ENCODE measurements at regions of chr14 and their contacts with region 1.

Region 1: GRCh38 chr14:90903101-90903500 is 86.9 kb upstream of the TTC7B start:
- DNase-seq: peak; percentile 11 to 71 (median 57)
- ATAC-seq: peak; percentile 89
- H3K4me3 ChIP-seq: no peak overlapping the region
- H3K4me3 Mint-ChIP-seq: no peak overlapping the region
- H3K27ac ChIP-seq: no peak overlapping the region
- H3K27ac Mint-ChIP-seq: peak overlapping the region in 2 of 9 donors; percentile 36 to 48
- H3K4me1 ChIP-seq: no peaks in the 10 kb centered on the region
- H3K4me1 Mint-ChIP-seq: peaks cover 0 to 30% (median 0%) of the 10 kb centered on the region in 7 donors
- H3K27me3 ChIP-seq: no peaks in the 10 kb centered on the region
- H3K27me3 Mint-ChIP-seq: no peaks in the 10 kb centered on the region

Region 2: DNA sequence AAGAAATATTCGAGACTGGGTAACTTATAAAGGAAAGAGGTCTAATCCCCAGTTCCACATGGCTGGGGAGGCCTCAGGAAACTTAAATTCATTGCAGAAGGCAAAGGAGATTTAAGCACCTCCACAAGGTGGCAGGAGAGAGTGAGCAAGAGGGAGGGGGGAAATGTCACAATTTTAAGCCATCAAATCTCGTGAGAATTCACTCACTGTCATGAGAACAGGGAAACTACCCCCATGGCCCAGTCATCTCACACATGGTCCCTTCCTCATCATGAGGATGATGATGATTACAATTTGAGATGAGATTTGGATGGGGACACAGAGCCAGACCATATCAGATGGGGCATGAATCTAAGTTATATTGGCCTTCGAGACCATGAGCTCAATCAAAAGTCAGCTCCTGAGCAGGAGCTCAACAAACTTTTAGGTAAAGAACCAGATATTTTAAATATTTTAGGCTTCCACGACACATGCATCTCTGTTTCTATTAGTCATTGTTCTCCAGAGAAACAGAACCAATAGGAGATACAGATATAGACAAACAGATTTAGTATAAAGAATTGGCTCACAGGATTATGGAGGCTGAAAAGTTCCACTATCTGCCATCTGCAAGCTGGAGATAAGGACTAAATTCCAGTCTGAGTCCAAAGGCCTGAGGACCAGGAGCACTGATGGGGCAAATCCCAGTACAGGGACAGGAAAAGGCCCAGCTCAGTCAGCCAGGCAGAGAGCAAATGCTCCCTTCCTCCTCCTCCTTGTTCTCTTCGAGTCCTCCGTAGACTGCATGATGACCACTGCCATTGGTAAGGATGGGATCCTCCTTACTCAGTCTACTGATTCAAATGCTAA is 235.6 kb after region 1 on chr14:
- CTCF ChIA-PET with region 1: interaction called, 9 read pairs
- POLR2A ChIA-PET with region 1: no interaction called
- intact Hi-C with region 1: loop called (anchors 1 to 10 kb)
- DNase-seq: peak in 8 of 9 donors; percentile 11 to 56 (median 45)
- ATAC-seq: peak; percentile 75
- H3K4me3 ChIP-seq: no peak overlapping the region
- H3K4me3 Mint-ChIP-seq: no peak overlapping the region
- H3K27ac ChIP-seq: no peak overlapping the region
- H3K27ac Mint-ChIP-seq: peak overlapping the region in 4 of 9 donors; percentile 31 to 67 (median 52)
- H3K4me1 ChIP-seq: peaks cover 5 to 12% of the 10 kb centered on the region in 2 donors
- H3K4me1 Mint-ChIP-seq: peaks cover 16 to 59% (median 33%) of the 10 kb centered on the region in 7 donors
- H3K27me3 ChIP-seq: no peaks in the 10 kb centered on the region
- H3K27me3 Mint-ChIP-seq: no peaks in the 10 kb centered on the region

Region 3: DNA sequence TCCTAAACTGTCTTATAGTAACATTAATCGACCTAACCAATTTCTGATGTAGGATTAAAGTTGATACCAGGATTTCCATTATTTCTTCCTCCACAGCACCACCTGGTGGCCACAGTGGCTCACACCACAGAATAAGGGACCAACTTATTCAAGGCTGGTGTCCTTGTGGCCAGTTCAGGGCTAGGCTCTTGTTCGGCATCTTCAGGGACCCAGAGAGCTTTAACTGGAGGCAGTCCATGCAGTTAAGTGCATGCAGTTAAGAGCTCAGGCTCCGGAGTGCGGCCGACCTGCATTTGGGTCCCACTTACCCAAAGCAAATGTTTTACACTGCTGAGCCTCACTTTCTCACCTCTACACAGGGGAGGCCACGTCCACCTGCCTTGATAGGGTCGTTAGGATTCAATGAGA is 383.4 kb after region 1 on chr14:
- CTCF ChIA-PET with region 1: interaction called, 5 read pairs
- POLR2A ChIA-PET with region 1: no interaction called
- intact Hi-C with region 1: loop called (anchors 1 kb)
- DNase-seq: peak; percentile 55 to 77 (median 69)
- ATAC-seq: peak; percentile 89
- H3K4me3 ChIP-seq: no peak overlapping the region
- H3K4me3 Mint-ChIP-seq: peak overlapping the region in 1 of 10 donors; percentile 35
- H3K27ac ChIP-seq: no peak overlapping the region
- H3K27ac Mint-ChIP-seq: peak overlapping the region; percentile 2 to 86 (median 63)
- H3K4me1 ChIP-seq: no peaks in the 10 kb centered on the region
- H3K4me1 Mint-ChIP-seq: peaks cover 11 to 25% (median 17%) of the 10 kb centered on the region in 7 donors
- H3K27me3 ChIP-seq: no peaks in the 10 kb centered on the region
- H3K27me3 Mint-ChIP-seq: no peaks in the 10 kb centered on the region

Measured in naive thymus-derived CD4-positive, alpha-beta T cell (primary cell).